ENCODE measurements at regions of chr2 and their contacts with region 1.

Region 1: GRCh38 chr2:68909793-68910674 is 38.8 kb upstream of the BMP10 start:
- DNase-seq: peak; percentile 82
- ATAC-seq: peak; percentile 83
- H3K4me3 ChIP-seq: no peak overlapping the region
- H3K27ac ChIP-seq: no peak overlapping the region
- H3K4me1 ChIP-seq: peaks cover 10% of the 10 kb centered on the region
- H3K27me3 ChIP-seq: no peaks in the 10 kb centered on the region
- CTCF ChIP-seq: peak; percentile 90
- POLR2A ChIP-seq: no peak
- RAD21 ChIP-seq: peak; percentile 95

Region 2: DNA sequence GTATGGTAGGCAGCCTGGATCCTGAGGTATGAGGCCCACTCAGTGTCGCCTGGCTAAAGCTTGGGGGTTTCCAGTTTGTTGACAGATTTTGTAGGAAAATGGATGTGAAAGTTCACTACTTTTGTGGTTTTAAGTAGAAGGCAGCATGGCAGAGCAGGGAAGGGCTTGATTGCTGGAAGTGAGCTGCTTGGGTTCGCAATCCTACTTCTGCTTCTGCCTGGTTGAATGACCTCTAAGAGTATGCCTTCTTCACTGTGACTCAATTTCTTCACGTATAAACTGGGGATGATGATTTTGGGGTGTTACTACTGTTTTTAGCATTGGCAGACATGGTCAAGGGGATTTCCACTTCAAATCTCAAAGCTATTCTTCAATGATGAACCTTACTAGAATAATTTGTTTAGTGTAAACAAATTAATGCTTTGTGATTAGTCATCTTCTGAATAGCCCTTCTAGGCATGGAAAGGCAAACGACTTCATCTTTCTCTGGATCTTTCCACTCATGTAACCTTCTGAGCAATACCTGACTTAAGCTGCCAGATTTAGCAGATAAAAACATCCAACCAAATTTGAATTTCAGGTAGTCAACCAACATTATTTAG is 52.1 kb before region 1 on chr2:
- CTCF ChIA-PET with region 1: interaction called, 4 read pairs
- POLR2A ChIA-PET with region 1: no interaction called
- dilution Hi-C with region 1: no loop called
- in situ Hi-C with region 1: no loop called
- intact Hi-C with region 1: loop called (anchors 5 kb)
- DNase-seq: peak; percentile 82
- ATAC-seq: peak; percentile 60
- H3K4me3 ChIP-seq: no peak overlapping the region
- H3K27ac ChIP-seq: no peak overlapping the region; the same call in 1 of the 2 replicates
- H3K4me1 ChIP-seq: peaks cover 10% of the 10 kb centered on the region; the same call in 1 of the 2 replicates
- H3K27me3 ChIP-seq: no peaks in the 10 kb centered on the region
- CTCF ChIP-seq: no peak
- POLR2A ChIP-seq: no peak
- RAD21 ChIP-seq: no peak